ENCODE measurements at regions of chr16 and their contacts with region 1.

Region 1: GRCh38 chr16:2023098-2023925 is 3.4 kb upstream of the NHERF2 start:
- DNase-seq: peak; percentile 96 to 97
- ATAC-seq: peak; percentile 92 to 98 (median 95)
- H3K4me3 ChIP-seq: peak overlapping the region; percentile 24
- H3K4me3 Mint-ChIP-seq: peak overlapping the region; percentile 80
- H3K27ac ChIP-seq: peak overlapping the region; percentile 78
- H3K27ac Mint-ChIP-seq: peak overlapping the region; percentile 73 to 80
- H3K4me1 ChIP-seq: peaks cover 40% of the 10 kb centered on the region
- H3K4me1 Mint-ChIP-seq: peaks cover 8 to 21% of the 10 kb centered on the region in 2 donors
- H3K27me3 ChIP-seq: peaks cover 19% of the 10 kb centered on the region
- H3K27me3 Mint-ChIP-seq: peaks cover 0 to 24% of the 10 kb centered on the region in 2 donors
- CTCF ChIP-seq: peak; percentile 93

Region 2: GRCh38 chr16:1713933-1714332 is 309.4 kb before region 1 on chr16:
- intact Hi-C with region 1: no loop called
- DNase-seq: no peak
- ATAC-seq: peak in 1 of 3 donors; percentile 52
- H3K4me3 ChIP-seq: no peak overlapping the region
- H3K4me3 Mint-ChIP-seq: no peak overlapping the region
- H3K27ac ChIP-seq: peak overlapping the region; percentile 90
- H3K27ac Mint-ChIP-seq: no peak overlapping the region
- H3K4me1 ChIP-seq: peaks cover 38% of the 10 kb centered on the region
- H3K4me1 Mint-ChIP-seq: peaks cover 24 to 31% of the 10 kb centered on the region in 2 donors
- H3K27me3 ChIP-seq: no peaks in the 10 kb centered on the region
- H3K27me3 Mint-ChIP-seq: no peaks in the 10 kb centered on the region
- CTCF ChIP-seq: no peak

Region 3: GRCh38 chr16:2047330-2048115 is 24.2 kb after region 1 on chr16 and contains the starts of genes NTHL1 and TSC2:
- intact Hi-C with region 1: loop called (anchors 1 kb)
- DNase-seq: peak; percentile 92 to 96
- ATAC-seq: peak; percentile 95 to 99 (median 99)
- H3K4me3 ChIP-seq: peak within 1 kb of the TSS; percentile 71
- H3K4me3 Mint-ChIP-seq: peak within 1 kb of the TSS; percentile 93
- H3K27ac ChIP-seq: no peak within 1 kb of the TSS
- H3K27ac Mint-ChIP-seq: peak within 1 kb of the TSS; percentile 61 to 73
- H3K4me1 ChIP-seq: peaks cover 35% of the 10 kb centered on the region
- H3K4me1 Mint-ChIP-seq: peaks cover 14 to 28% of the 10 kb centered on the region in 2 donors
- H3K27me3 ChIP-seq: no peaks in the 10 kb centered on the region
- H3K27me3 Mint-ChIP-seq: no peaks in the 10 kb centered on the region
- CTCF ChIP-seq: peak; percentile 41
- total RNA-seq, gene NTHL1: 8.7 to 12.9 (median 9.7) TPM
- total RNA-seq, gene TSC2: 135 to 197 (median 161) TPM

Region 4: GRCh38 chr16:2142942-2143877 is 119.9 kb after region 1 on chr16:
- intact Hi-C with region 1: loop called (anchors 1 kb)
- DNase-seq: no peak
- ATAC-seq: no peak
- H3K4me3 ChIP-seq: no peak overlapping the region
- H3K4me3 Mint-ChIP-seq: no peak overlapping the region
- H3K27ac ChIP-seq: no peak overlapping the region
- H3K27ac Mint-ChIP-seq: no peak overlapping the region
- H3K4me1 ChIP-seq: peaks cover 11% of the 10 kb centered on the region
- H3K4me1 Mint-ChIP-seq: peaks cover 6 to 8% of the 10 kb centered on the region in 2 donors
- H3K27me3 ChIP-seq: no peaks in the 10 kb centered on the region
- H3K27me3 Mint-ChIP-seq: peaks cover 0 to 3% of the 10 kb centered on the region in 2 donors
- CTCF ChIP-seq: no peak

Region 5: DNA sequence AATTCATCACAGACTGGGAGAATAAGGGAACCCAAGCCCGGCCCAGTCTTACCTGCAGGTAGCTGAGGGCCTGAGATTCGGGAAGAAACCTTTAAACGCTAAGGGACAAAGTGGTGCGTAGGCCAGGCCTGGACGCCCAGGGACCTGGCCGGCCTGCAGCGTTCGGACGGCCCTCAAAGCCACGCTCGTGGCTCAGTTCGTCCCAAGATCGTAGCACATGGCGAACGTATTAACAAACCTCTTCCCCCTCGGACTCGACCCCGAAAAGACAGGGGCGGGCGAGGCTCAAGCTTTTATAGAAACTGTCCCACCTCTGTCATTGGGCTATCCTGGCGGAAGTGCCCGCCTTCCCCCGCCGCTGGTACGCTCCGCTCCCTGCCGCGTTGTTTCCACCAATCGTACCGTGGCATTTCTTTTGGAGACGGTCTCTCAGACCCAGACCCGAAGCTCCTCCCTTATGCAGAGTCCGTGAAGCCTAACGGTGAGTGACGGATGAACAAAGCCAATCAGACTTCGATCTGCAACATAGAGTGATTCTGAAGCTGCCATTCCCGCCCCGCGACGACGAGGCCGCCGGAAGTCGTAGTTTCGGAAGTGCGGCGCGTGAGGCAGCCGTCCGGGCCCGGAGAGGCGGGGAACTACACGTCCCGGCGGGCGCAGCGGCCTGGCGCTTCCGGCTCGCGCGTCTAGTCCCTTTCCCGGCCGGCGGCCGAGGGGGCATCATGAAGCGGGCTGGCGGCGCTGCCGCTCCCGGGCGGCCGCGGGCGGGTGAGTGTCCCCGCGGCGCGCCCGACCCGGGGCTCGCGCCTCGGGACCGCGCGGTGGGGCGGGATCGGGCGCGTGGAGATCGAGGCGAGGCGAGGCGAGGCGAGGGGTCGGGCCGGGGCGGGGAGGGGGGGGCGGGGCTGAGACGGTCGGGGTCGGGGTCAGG is 132.0 kb after region 1 on chr16 and contains the start of gene TRAF7:
- intact Hi-C with region 1: loop called (anchors 1 kb)
- DNase-seq: peak; percentile 94 to 100
- ATAC-seq: peak; percentile 90 to 98 (median 91)
- H3K4me3 ChIP-seq: peak within 1 kb of the TSS; percentile 61
- H3K4me3 Mint-ChIP-seq: peak within 1 kb of the TSS; percentile 97
- H3K27ac ChIP-seq: peak within 1 kb of the TSS; percentile 57
- H3K27ac Mint-ChIP-seq: peak within 1 kb of the TSS; percentile 87
- H3K4me1 ChIP-seq: peaks cover 68% of the 10 kb centered on the region
- H3K4me1 Mint-ChIP-seq: peaks cover 30 to 61% of the 10 kb centered on the region in 2 donors
- H3K27me3 ChIP-seq: no peaks in the 10 kb centered on the region
- H3K27me3 Mint-ChIP-seq: no peaks in the 10 kb centered on the region
- CTCF ChIP-seq: no peak
- total RNA-seq, gene TRAF7: 29.3 to 39.1 (median 37.3) TPM

Region 6: DNA sequence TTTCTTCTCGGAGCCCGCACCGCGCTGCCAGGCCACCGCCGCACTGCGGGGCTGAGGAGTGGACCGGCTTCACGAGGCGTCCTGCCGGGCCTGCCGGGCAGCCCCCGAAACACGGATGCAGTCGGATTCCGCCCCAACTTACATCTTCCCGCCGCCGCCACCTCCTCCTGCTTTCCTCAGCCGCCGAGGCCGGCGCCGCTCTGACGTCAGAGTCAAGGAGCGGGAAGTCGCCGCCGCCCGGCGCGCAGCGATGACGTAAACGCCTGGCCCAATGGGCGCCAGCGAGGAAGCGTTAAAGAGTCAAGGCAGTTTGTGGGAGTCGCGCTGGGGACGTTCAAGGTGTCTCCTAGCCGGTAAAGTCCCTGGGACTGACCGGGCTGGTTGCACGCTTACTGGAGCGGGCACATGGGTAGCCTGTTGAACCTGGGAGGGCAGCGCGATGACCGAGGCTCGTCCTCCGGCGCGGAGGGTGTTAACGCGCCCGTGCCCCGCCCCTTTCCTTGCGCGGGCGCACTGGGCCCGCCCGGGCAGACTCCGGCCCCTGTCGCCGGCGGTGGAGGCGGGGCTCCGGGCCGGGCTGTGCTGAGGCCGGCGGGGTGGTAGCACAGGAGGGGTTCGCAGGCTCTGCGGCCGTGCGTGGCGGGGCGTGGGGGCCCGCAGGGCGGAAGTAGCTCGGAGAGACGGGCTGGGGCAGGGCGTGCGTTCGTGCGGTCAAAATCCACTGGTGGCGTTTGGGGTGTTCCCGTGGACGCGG is 244.8 kb after region 1 on chr16 and contains the start of gene RNPS1:
- intact Hi-C with region 1: loop called (anchors 10 kb)
- DNase-seq: peak; percentile 99
- ATAC-seq: peak; percentile 87 to 94 (median 88)
- H3K4me3 ChIP-seq: peak within 1 kb of the TSS; percentile 87
- H3K4me3 Mint-ChIP-seq: peak within 1 kb of the TSS; percentile 97
- H3K27ac ChIP-seq: peak within 1 kb of the TSS; percentile 99
- H3K27ac Mint-ChIP-seq: peak within 1 kb of the TSS; percentile 97 to 99
- H3K4me1 ChIP-seq: peaks cover 38% of the 10 kb centered on the region
- H3K4me1 Mint-ChIP-seq: peaks cover 40 to 50% of the 10 kb centered on the region in 2 donors
- H3K27me3 ChIP-seq: no peaks in the 10 kb centered on the region
- H3K27me3 Mint-ChIP-seq: no peaks in the 10 kb centered on the region
- CTCF ChIP-seq: no peak
- total RNA-seq, gene RNPS1: 269 to 284 (median 273) TPM